Activated naive CD4-positive, alpha-beta T cell treated with anti-CD3 and anti-CD28 coated beads for 36 hours (primary cell): ENCODE measurements at regions of chrX and their contacts with region 1.

Region 1: DNA sequence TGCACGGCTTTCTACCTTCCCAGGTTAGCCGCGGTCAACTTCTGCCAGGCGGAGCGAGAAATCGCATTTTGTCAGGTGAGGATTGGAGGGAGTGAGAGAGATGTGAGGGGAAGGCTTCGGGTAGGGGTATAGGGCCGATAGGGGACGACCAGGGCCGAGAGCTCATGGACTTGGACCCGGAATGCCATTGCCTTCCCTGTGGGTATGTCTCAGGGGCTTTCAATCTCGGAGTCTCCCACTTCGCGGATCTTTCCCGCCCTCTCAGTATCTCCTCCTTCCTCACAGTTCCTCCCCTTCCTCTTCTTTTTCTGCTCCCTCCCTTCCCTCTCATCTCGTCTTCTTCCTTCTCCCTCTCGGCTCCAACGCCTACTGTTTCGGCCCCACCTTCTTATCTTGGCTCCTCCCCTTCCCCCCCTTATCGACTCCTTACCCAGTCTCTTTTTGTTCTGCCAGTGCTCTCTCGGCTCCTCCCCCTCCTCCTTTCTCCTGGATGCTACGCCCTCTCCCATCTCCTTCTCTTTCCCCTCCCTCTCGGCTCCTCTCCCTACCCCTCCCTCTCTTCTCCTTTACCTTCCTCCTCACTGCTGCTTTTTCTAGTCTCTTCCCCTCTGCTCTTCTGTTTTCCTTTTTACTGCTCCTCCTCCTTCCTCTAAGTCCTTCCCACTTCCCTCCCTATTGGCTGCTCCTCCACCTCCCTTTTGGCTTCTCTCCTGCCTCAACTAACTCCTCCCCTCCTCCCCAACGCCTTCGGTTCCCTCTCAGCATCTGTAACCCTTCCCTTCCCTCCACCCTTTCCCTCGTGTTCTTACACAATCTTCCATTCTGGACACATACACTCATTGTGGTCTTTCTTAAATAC is 29.4 kb upstream of the RBMX start:
- DNase-seq: peak; percentile 75
- H3K4me3 Mint-ChIP-seq: peak overlapping the region; percentile 89
- H3K27ac Mint-ChIP-seq: peak overlapping the region; percentile 87
- H3K4me1 Mint-ChIP-seq: peaks cover 15% of the 10 kb centered on the region
- H3K27me3 Mint-ChIP-seq: no peaks in the 10 kb centered on the region

Region 2: DNA sequence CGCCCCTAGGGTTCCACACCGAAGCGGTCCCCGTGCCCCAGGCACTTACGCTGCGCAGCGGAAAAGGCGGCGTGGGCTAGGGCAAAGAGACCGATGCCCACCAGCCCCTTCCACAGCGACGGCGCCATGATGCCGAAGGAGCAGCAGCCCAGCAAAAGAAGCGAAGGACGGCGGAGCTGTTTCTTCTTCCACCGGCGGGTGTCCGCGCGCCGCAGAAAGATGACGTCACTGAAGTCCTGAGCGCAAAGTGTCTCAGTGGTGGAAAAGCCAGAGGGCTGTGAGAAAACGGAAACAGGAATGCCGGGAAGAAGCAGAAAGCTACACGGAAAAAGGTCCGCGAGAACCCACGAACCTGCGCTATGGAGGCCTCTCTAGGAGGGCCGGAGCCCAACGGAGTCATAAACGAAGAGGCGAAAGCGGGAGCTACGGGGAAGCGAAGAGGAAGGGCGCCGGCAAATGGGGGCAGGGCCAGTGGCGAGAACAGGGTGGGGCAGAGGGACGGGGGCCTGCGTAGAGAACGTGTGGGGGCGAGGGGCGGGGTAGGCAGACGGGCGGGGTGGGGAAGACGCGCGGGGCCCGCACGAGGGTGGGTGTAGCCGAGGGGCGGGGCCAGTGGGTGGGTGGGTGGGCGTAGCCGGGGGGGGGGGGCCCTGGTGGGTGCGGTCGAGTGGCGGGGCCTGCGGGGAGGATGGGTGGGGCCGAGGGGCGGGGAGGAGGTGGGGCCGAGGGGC is 936.2 kb before region 1 on chrX and contains the start of gene MMGT1:
- CTCF ChIA-PET with region 1: no interaction called
- intact Hi-C with region 1: loop called (anchors 10 kb)
- DNase-seq: peak; percentile 84
- H3K4me3 Mint-ChIP-seq: peak within 1 kb of the TSS; percentile 95
- H3K27ac Mint-ChIP-seq: peak within 1 kb of the TSS; percentile 92
- H3K4me1 Mint-ChIP-seq: peaks cover 23% of the 10 kb centered on the region
- H3K27me3 Mint-ChIP-seq: no peaks in the 10 kb centered on the region
- total RNA-seq, gene MMGT1: 17.0 to 17.1 TPM

Region 3: GRCh38 chrX:136866337-136867095 is 43.4 kb before region 1 on chrX:
- CTCF ChIA-PET with region 1: no interaction called
- intact Hi-C with region 1: loop called (anchors 5 kb)
- DNase-seq: no peak
- H3K4me3 Mint-ChIP-seq: peak overlapping the region; percentile 32
- H3K27ac Mint-ChIP-seq: peak overlapping the region; percentile 87
- H3K4me1 Mint-ChIP-seq: peaks cover 52% of the 10 kb centered on the region
- H3K27me3 Mint-ChIP-seq: no peaks in the 10 kb centered on the region

Region 4: DNA sequence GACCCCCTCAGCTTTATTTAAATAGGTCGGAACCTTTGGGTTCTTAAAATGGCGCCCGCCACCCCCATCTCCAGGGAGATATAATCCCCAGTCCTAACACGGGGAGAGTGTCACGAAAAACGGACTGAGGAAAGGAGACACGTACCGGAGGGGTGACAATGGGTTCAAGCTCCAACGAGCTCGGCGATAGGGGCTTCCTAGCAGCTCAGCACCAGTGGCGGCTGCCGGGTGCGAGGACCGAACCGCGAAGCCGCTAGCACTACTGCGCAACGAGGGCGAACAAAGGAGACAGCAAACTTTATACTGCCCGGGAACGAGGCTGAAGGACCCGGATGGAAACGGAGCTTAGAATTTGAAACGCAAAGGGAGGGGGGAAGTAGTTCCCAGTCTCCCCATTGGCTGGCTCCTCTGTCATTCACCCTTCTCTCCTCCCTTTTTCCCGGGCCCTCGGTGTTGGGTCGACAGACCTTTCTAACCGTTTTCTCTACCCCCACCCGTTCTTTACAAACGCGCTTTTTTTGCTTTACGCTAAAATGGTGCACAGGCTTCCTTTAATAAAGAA is 29.4 kb before region 1 on chrX and contains the start of gene RBMX:
- CTCF ChIA-PET with region 1: interaction called, 3 read pairs
- intact Hi-C with region 1: loop called (anchors 1 kb)
- DNase-seq: peak; percentile 94
- H3K4me3 Mint-ChIP-seq: peak within 1 kb of the TSS; percentile 97
- H3K27ac Mint-ChIP-seq: peak within 1 kb of the TSS; percentile 98
- H3K4me1 Mint-ChIP-seq: peaks cover 24% of the 10 kb centered on the region
- H3K27me3 Mint-ChIP-seq: no peaks in the 10 kb centered on the region
- total RNA-seq, gene RBMX: 278 to 280 TPM

Region 5: DNA sequence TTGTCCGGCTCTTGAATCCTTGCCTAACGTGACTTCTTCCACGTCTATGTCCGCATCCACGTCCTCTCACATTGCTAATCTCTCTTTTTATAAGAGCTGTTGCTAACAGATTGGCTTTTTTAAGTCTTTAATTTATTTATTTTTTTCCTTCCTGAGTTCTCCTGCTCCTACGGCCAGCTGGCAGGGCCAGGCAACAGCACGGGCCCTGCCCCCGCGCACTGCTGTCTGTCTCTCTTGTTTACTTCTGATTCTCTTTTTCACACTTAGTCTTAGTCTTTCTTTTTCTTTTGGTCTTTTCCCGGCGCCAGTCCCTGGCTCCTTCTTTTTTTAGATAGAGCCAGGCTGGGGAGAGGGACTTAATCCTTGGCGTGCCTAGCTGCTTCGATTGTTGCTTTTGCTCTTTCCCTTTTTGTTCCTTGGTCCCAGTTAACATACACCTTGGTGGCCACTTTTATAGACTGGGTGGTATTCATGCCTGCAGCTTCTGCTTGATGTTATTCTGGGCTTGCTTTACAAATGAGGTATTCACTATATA is 23.7 kb after region 1 on chrX:
- CTCF ChIA-PET with region 1: no interaction called
- intact Hi-C with region 1: no loop called
- DNase-seq: no peak
- H3K4me3 Mint-ChIP-seq: no peak overlapping the region
- H3K27ac Mint-ChIP-seq: no peak overlapping the region
- H3K4me1 Mint-ChIP-seq: peaks cover 14% of the 10 kb centered on the region
- H3K27me3 Mint-ChIP-seq: no peaks in the 10 kb centered on the region